Left ventricle myocardium superior (tissue), 1 donor: ENCODE measurements at regions of chr11 and their contacts with region 1.

Region 1: DNA sequence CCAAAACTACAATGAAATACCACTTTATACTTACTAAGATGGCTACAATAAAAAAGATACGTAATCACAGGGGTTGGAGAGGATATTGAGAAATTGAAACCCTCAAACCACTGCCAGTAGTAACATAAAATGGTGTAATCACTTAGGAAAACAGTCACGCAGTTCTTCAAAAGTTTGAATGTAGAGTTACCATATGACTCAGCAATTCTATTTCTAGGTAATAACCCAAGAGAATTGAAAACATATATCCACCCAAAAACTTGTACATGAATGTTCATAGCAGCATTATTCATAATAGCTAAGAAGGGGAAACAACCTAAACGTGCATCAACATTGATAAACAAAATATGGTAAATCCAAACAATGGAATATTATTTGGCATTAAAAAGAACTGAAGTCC is 24.4 kb upstream of the PSMA1 start:
- DNase-seq: no peak
- ATAC-seq: no peak

Region 2: GRCh38 chr11:14358729-14359439 is 185.7 kb before region 1 on chr11 and contains the start of gene RRAS2:
- intact Hi-C with region 1: no loop called
- DNase-seq: peak; percentile 88
- ATAC-seq: peak; percentile 90
- total RNA-seq, gene RRAS2: 30.6 TPM

Region 3: GRCh38 chr11:14506532-14506931 is 38.1 kb before region 1 on chr11:
- intact Hi-C with region 1: no loop called
- DNase-seq: no peak
- ATAC-seq: no peak

Region 4: DNA sequence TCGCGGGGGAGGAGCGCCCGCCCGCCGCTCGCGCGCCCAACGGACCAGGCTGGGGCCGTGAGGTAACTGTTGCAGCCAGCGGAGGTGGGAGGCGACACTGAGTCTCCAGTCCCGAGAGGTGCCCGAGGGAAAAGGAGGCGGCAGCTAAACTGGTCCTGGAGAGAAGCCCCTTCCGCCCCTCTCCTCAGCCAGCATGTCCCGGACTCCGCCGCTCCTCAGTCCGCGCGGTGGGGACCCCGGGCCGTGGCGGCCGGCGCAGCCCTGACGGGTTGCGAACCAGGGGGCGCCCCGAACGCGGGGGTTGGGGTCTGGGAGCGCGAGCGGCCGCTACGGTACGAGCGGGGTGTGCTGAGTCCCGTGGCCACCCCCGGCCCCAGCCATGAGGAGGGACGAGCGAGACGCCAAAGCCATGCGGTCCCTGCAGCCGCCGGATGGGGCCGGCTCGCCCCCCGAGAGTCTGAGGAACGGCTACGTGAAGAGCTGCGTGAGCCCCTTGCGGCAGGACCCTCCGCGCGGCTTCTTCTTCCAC is 99.2 kb after region 1 on chr11 and contains the start of gene PDE3B:
- intact Hi-C with region 1: loop called (anchors 10 kb)
- DNase-seq: peak; percentile 91
- ATAC-seq: peak; percentile 96
- total RNA-seq, gene PDE3B: 5.6 TPM